GM10248 (cell line): ENCODE measurements at regions of chr11 and their contacts with region 1.

Region 1: GRCh38 chr11:45110562-45110961 is 35.9 kb upstream of the PRDM11 start:
- DNase-seq: peak; percentile 71
- CTCF ChIP-seq: peak; percentile 67

Region 2: GRCh38 chr11:44409558-44410236 is 700.9 kb before region 1 on chr11:
- CTCF ChIA-PET with region 1: no interaction called
- POLR2A ChIA-PET with region 1: no interaction called
- DNase-seq: no peak
- CTCF ChIP-seq: no peak

Region 3: DNA sequence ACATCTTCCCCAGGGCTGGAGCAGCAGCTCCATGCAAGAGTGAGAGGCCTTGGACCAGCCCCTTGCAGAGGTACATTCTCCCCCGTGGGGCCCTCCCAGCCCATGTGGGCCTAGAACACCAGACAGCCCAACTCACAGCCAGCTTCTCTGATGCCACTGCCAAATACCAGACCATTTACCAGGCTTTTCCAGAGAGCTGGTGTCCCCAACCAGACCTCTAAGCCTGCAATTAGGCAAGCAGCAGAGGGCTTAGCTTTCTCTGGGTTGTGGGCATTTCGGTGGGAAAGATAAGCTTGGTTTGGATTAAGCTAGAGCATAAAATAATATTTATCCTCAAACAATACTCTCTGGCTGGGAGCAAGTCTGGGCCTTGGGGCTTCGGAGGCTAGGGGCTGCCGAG is 235.5 kb before region 1 on chr11:
- CTCF ChIA-PET with region 1: no interaction called
- POLR2A ChIA-PET with region 1: no interaction called
- DNase-seq: no peak
- CTCF ChIP-seq: no peak

Region 4: DNA sequence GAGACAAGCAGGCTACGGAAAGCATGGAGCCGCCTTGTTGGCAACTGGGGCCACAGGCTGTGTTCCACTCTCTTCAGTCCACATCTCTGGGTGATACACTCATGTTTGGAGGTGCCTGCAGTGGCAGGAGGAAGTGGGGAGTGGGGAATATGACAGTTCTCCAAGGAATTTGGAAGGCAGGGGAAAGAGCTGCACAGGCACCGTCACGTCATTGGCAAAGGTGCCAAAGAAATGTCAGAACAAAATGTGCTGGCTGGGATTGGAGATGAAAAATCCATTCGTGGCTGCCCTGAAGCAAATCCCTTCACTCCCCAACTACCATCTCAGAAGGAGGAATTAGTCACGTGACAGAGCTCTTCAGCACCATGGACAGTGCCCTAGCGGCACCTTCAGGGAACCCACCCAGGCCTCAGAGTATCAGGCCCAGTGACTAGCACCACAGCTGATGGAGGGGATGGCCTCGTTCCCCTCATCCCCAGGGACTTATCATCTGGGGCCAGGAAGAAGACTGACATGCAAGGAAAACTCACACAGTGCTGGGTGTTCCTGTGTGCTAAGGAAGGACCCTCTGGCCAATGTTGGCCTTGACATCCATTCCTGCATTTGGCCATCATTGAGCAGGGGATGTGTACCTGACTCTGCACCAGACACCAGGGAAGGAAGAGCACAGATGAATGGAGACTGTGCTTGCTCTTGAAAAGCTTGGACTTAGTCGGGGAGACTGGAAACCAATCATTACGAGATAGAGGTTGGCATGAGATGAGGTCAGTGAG is 12.7 kb before region 1 on chr11:
- CTCF ChIA-PET with region 1: interaction called, 30 read pairs
- POLR2A ChIA-PET with region 1: no interaction called
- DNase-seq: no peak
- CTCF ChIP-seq: no peak

Region 5: DNA sequence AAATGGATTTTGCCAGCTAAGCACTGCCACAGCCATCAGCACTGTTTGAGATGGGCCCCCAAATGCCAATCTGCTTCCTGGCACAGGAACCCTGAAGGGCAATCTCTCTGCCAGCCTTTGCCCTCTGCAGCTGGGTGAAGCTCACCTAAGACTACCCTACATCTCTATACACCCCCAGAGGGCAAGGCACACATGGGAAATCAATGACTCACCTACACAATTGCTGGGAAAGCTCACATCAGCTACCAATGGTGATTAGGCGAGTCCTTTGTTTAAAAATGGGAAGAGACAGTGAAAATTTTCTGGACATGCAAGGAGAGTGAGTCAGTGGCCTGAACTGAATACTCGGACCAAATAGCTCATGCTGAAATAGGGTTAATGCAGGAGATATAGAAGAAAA is 23.3 kb after region 1 on chr11:
- CTCF ChIA-PET with region 1: interaction called, 13 read pairs
- POLR2A ChIA-PET with region 1: no interaction called
- DNase-seq: no peak
- CTCF ChIP-seq: no peak

Region 6: GRCh38 chr11:45163956-45164575 is 53.5 kb after region 1 on chr11:
- CTCF ChIA-PET with region 1: no interaction called
- POLR2A ChIA-PET with region 1: no interaction called
- DNase-seq: no peak
- CTCF ChIP-seq: no peak

Region 7: GRCh38 chr11:45285930-45286632 is 175.5 kb after region 1 on chr11 and contains the start of gene SYT13:
- CTCF ChIA-PET with region 1: interaction called, 42 read pairs
- POLR2A ChIA-PET with region 1: no interaction called
- DNase-seq: no peak
- CTCF ChIP-seq: no peak

Region 8: GRCh38 chr11:45294499-45294898 is 183.9 kb after region 1 on chr11:
- CTCF ChIA-PET with region 1: interaction called, 42 read pairs
- POLR2A ChIA-PET with region 1: no interaction called
- DNase-seq: no peak
- CTCF ChIP-seq: no peak

Region 9: DNA sequence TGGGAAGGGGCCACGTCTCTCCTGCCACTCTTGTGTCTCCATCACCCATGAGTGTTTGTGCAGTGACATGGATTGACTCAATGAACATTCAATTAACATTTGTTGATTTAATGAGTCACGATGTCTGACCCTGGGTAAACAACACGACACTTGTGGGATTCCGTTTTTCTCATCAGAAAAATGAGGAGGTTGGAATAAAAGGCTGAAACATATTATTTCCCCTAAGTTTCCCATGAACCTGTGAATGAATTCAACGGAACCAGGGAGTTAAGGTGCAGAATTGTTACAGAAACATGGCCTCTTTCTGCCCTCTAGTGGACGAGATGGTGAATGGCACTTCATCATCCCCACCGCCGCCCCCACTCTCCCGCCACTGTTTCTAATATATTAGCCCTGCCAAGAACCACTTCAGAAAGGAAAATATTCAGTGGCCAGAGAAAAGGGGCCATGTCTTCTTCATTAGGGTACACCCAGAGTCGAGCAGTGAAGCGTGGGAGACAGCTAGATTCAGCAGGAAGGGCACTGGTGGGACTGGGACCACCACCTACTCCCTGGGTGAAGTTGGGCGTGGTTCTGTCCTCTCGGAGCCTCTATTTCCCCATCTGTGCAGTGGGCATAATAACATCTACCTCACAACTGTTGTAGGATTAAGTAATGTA is 221.8 kb after region 1 on chr11:
- CTCF ChIA-PET with region 1: interaction called, 63 read pairs
- POLR2A ChIA-PET with region 1: no interaction called
- DNase-seq: peak; percentile 66
- CTCF ChIP-seq: peak; percentile 47